ENCODE measurements at regions of chr6 and their contacts with region 1.

Region 1: DNA sequence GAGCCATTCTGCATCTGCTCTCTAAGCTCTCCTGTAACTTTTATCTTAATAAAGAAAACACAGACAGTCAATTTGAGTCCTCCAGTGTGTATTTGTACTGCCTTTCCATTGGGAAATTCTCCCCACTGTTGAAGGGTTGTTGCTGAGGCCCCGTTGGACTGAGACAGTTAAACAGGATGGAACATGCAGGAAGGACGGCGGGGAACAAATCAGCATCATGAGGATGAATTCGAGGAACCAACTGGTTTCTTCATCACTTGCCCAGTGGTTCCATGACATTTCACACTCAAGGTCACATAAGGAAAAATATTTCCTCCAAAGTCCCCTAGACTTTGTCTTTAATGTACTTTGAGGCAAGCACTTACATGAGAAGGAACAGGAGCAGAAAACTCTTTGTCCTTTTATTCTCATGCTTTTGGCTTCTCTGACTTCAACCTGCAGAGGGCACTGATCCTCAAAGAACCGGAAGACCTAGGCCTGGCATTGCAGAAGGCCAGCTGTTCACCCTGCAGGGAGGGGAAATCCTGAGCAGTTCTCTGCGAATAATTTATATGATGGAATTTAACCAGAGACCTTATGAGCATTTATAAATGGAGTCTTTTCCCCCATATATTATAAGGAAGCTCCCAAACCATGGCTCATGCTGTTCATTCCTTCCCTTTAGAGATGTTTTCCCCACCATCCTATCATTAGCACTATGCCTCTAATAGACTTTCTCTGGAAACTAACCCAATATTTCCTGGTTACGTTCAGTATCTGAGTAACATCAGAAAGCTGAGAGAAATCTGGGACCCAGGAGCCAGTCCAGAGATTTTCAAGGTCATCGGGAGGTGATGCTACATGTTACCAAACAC is 55.2 kb upstream of the ADGRF1 start:
- DNase-seq: peak; percentile 45 to 71
- H3K4me3 ChIP-seq: no peak overlapping the region
- H3K4me1 ChIP-seq: no peaks in the 10 kb centered on the region
- H3K27me3 ChIP-seq: no peaks in the 10 kb centered on the region

Region 2: DNA sequence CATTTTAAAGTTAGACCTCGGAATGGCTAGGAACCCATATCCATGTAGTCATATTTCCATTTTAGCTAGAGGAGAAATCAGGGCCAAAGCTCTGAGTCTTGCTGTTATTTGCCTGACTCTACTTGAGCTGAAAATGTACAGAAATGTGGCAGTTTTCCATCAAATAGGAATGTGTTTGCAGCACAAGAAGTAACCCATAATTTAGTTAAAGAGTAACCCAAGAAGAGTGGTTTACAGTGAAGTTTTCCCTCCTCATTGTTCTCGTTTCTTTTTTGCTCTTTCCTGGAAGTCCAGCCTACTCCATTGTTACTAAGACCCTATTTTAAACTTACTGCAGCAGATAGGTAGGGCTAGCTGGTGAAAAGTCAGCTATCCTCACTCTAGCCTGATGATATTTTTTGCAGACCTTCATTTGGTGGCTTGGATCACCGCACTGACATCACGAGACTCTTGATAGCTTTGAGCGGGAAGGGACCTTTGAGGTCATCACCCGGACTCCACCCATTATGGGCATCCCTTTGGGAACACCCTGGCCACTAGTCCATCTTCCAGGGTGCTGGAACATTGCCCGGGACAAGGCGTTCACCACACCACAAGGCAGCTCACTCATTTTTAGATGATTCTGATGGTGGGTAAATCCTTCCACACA is 147.6 kb before region 1 on chr6:
- in situ Hi-C with region 1: no loop called
- DNase-seq: no peak
- H3K4me3 ChIP-seq: no peak overlapping the region
- H3K4me1 ChIP-seq: no peaks in the 10 kb centered on the region
- H3K27me3 ChIP-seq: no peaks in the 10 kb centered on the region

Region 3: GRCh38 chr6:47309291-47310130 is 212.2 kb after region 1 on chr6 and contains the start of gene TNFRSF21:
- in situ Hi-C with region 1: loop called (anchors 5 kb)
- DNase-seq: peak; percentile 83 to 91
- H3K4me3 ChIP-seq: peak within 1 kb of the TSS; percentile 51
- H3K4me1 ChIP-seq: peaks cover 5% of the 10 kb centered on the region; the same call in 1 of the 2 replicates
- H3K27me3 ChIP-seq: peaks cover 5% of the 10 kb centered on the region; the same call in 1 of the 2 replicates

Measured in HAP-1 (cell line).